ENCODE measurements at regions of chr19 and their contacts with region 1.

Region 1: DNA sequence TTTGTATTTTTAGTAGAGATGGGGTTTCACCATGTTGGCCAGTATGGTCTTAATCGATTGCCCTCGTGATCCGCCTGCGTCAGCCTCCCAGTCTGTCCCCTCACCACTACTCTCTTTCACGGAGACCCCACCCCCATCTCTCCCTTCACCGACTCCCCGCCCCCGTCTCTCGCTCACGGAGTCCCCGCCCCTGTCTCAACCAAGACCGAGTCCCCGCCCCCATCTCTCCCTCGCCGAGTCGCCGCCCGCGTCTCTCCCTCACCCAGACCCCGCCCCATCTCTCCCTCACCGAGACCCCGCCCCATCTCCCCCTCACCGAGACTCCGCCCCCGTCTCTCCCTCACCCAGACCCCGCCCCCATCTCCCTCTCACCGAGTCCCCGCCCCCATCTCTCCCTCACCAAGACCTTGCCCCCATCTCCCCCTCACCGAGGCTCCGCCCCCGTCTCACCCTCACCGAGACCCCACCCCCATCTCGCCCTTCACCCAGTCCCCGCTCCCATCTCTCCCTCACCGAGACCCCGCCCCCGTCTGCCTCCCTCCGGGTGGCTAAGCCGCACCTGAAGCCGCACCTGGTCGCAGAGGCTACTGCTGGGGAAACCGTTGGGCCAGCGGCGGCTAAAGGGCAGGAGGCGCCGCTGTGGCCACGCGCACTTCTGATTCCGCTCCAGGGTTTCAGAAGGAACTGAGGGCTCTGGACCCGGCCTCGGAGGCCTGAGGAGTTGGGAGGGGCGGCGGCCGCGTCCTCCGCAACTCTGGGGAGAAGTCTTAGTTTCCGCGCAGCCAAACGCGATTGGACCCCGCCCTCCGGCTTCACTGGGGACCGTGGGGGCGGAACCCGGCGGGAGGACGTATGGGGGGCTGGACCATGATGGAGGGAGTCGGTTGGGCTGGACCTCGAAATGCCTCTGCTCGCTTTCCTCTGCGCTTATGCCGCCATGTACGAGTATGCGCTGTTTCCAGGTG is 17.1 kb upstream of the ZNF846 start:
- DNase-seq: peak; percentile 87 to 98
- H3K4me3 ChIP-seq: peak overlapping the region; percentile 74 to 78
- H3K27ac ChIP-seq: peak overlapping the region; percentile 98
- H3K4me1 ChIP-seq: peaks cover 0 to 6% of the 10 kb centered on the region in 2 donors
- H3K27me3 ChIP-seq: no peaks in the 10 kb centered on the region
- CTCF ChIP-seq: no peak

Region 2: GRCh38 chr19:8832132-8833021 is 953.3 kb before region 1 on chr19 and contains the starts of genes MBD3L1 and ZNF558:
- intact Hi-C with region 1: loop called (anchors 2 kb)
- DNase-seq: peak; percentile 99 to 100
- H3K4me3 ChIP-seq: peak within 1 kb of the TSS; percentile 89 to 98
- H3K27ac ChIP-seq: peak within 1 kb of the TSS; percentile 88 to 98
- H3K4me1 ChIP-seq: peaks cover 0 to 8% of the 10 kb centered on the region in 2 donors
- H3K27me3 ChIP-seq: no peaks in the 10 kb centered on the region
- CTCF ChIP-seq: peak; percentile 7 to 56 (median 49)
- total RNA-seq, gene MBD3L1: not detected
- total RNA-seq, gene ZNF558: 12.8 TPM

Region 3: GRCh38 chr19:9768175-9769112 is 17.2 kb before region 1 on chr19 and contains the start of gene ZNF846:
- intact Hi-C with region 1: loop called (anchors 1 kb)
- DNase-seq: peak; percentile 69 to 95
- H3K4me3 ChIP-seq: peak within 1 kb of the TSS; percentile 77 to 94
- H3K27ac ChIP-seq: peak within 1 kb of the TSS; percentile 92 to 94
- H3K4me1 ChIP-seq: peaks cover 3 to 14% of the 10 kb centered on the region in 2 donors
- H3K27me3 ChIP-seq: no peaks in the 10 kb centered on the region
- CTCF ChIP-seq: no peak
- total RNA-seq, gene ZNF846: 1.9 TPM

Region 4: DNA sequence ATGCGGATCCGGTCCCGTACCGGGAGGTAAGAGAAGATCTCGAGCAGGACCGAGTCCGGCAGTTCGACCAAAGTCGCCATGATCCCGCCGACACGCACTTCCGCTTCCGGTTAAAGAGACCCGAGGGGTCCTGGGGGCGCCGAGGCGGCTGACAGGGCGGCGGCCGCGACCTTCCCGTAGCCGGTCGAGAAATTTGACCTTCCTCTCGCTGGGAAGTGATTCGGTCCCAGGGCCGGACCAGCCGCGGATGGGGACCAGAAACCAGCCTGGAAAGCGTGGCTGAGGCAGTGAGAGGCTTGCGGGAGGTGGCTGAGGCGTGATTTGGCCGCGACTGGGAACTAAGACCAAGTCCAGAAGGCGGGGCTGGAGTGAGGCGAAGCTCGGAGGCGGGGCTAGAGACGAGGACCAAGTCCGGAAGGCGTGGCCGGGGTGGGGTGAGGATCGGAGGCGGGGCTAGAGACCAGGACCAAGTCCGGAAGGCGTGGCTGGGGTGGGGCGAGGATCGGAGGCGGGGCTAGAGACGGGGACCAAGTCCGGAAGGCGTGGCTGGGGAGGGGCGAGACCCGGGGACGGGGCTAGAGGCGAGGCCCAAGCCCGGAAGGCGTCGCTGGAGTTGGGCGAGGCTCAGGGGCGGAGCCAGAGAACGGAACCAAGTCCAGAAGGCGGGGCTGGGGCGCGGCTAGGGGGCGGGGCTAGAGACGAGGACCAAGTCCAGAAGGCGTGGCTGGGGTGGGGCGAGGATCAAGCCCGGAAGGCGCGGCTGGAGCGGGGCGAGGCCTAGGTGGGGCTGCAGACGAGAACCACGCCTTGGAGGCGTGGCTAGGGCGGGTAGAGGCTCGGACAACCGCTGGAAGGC is 33.3 kb after region 1 on chr19 and contains the start of gene FBXL12:
- intact Hi-C with region 1: loop called (anchors 1 kb)
- DNase-seq: peak; percentile 100
- H3K4me3 ChIP-seq: peak within 1 kb of the TSS; percentile 69 to 86
- H3K27ac ChIP-seq: peak within 1 kb of the TSS; percentile 89 to 95
- H3K4me1 ChIP-seq: peaks cover 7 to 16% of the 10 kb centered on the region in 2 donors
- H3K27me3 ChIP-seq: no peaks in the 10 kb centered on the region
- CTCF ChIP-seq: no peak
- total RNA-seq, gene FBXL12: 64.4 TPM

Measured in ascending aorta (tissue), 2 donors.